Activated B cell treated with CpG ODN at 0.5 μM for 24 hours (primary cell): ENCODE measurements at regions of chr4 and their contacts with region 1.

Region 1: GRCh38 chr4:81471588-81472288 is at the start of gene RASGEF1B:
- DNase-seq: peak; percentile 97
- ATAC-seq: peak; percentile 82
- H3K4me3 Mint-ChIP-seq: peak within 1 kb of the TSS; percentile 92
- H3K27ac Mint-ChIP-seq: peak within 1 kb of the TSS; percentile 97
- H3K4me1 Mint-ChIP-seq: peaks cover 53% of the 10 kb centered on the region
- H3K27me3 Mint-ChIP-seq: no peaks in the 10 kb centered on the region
- CTCF ChIP-seq: no peak
- total RNA-seq, gene RASGEF1B: 40.2 and 43.7 TPM in 2 replicates

Region 2: GRCh38 chr4:81207828-81208227 is 263.9 kb before region 1 on chr4:
- CTCF ChIA-PET with region 1: no interaction called
- POLR2A ChIA-PET with region 1: no interaction called
- intact Hi-C with region 1: no loop called
- DNase-seq: no peak
- ATAC-seq: no peak
- H3K4me3 Mint-ChIP-seq: no peak overlapping the region
- H3K27ac Mint-ChIP-seq: no peak overlapping the region
- H3K4me1 Mint-ChIP-seq: no peaks in the 10 kb centered on the region
- H3K27me3 Mint-ChIP-seq: peaks cover 20% of the 10 kb centered on the region
- CTCF ChIP-seq: no peak

Region 3: GRCh38 chr4:81482326-81482725 is 10.6 kb after region 1 on chr4:
- CTCF ChIA-PET with region 1: interaction called, 12 read pairs
- POLR2A ChIA-PET with region 1: interaction called, 7 read pairs
- intact Hi-C with region 1: loop called (anchors 1 kb)
- DNase-seq: no peak
- ATAC-seq: no peak
- H3K4me3 Mint-ChIP-seq: no peak overlapping the region
- H3K27ac Mint-ChIP-seq: peak overlapping the region; percentile 43
- H3K4me1 Mint-ChIP-seq: peaks cover 8% of the 10 kb centered on the region
- H3K27me3 Mint-ChIP-seq: no peaks in the 10 kb centered on the region
- CTCF ChIP-seq: no peak

Region 4: GRCh38 chr4:81557306-81557705 is 85.6 kb after region 1 on chr4:
- CTCF ChIA-PET with region 1: interaction called, 20 read pairs
- POLR2A ChIA-PET with region 1: interaction called, 76 read pairs
- intact Hi-C with region 1: loop called (anchors 1 kb)
- DNase-seq: no peak
- ATAC-seq: no peak
- H3K4me3 Mint-ChIP-seq: no peak overlapping the region
- H3K27ac Mint-ChIP-seq: no peak overlapping the region
- H3K4me1 Mint-ChIP-seq: peaks cover 58% of the 10 kb centered on the region
- H3K27me3 Mint-ChIP-seq: no peaks in the 10 kb centered on the region
- CTCF ChIP-seq: no peak

Region 5: DNA sequence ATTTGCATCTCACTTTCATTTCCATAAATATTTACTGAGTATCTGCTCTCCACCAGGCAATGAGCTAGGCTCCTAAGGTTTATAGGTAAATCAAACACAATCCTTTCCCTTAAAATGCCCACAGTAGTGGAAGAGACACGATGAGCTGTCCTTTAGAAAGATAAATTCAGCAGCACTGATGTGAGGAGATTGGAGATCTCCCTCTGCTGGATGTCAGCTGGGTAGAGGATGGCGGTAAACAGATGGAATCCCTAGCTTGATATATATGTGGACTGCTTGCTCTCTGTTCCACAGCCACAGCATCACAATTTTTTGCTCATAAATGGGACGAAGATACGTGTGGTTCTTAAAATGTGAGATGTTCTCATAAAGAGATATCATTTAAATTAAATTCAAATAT is 216.3 kb after region 1 on chr4:
- CTCF ChIA-PET with region 1: interaction called, 42 read pairs
- POLR2A ChIA-PET with region 1: interaction called, 20 read pairs
- intact Hi-C with region 1: loop called (anchors 1 kb)
- DNase-seq: no peak
- ATAC-seq: no peak
- H3K4me3 Mint-ChIP-seq: no peak overlapping the region
- H3K27ac Mint-ChIP-seq: no peak overlapping the region
- H3K4me1 Mint-ChIP-seq: peaks cover 13% of the 10 kb centered on the region
- H3K27me3 Mint-ChIP-seq: no peaks in the 10 kb centered on the region
- CTCF ChIP-seq: no peak

Region 6: DNA sequence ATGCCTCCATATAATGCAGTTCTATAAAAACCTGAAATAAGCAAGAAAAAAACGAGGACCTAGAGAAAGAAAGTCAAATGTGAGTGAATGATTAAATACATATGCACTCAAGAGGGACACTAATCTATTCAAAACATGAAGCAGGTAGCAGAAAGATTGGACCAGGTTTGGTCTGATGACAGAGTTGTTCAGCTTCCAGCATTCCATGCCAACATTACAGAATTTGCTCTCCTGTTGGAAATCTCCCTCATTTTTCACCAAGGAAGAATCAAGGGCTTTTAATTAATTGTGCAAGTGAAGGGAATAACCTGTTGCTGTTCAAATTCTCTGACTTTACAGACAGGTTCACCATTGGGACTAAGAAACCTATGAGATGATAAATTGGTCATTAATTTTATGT is 379.0 kb after region 1 on chr4:
- CTCF ChIA-PET with region 1: interaction called, 239 read pairs
- POLR2A ChIA-PET with region 1: no interaction called
- intact Hi-C with region 1: no loop called
- DNase-seq: no peak
- ATAC-seq: no peak
- H3K4me3 Mint-ChIP-seq: no peak overlapping the region
- H3K27ac Mint-ChIP-seq: no peak overlapping the region
- H3K4me1 Mint-ChIP-seq: no peaks in the 10 kb centered on the region
- H3K27me3 Mint-ChIP-seq: peaks cover 2% of the 10 kb centered on the region
- CTCF ChIP-seq: no peak

Region 7: DNA sequence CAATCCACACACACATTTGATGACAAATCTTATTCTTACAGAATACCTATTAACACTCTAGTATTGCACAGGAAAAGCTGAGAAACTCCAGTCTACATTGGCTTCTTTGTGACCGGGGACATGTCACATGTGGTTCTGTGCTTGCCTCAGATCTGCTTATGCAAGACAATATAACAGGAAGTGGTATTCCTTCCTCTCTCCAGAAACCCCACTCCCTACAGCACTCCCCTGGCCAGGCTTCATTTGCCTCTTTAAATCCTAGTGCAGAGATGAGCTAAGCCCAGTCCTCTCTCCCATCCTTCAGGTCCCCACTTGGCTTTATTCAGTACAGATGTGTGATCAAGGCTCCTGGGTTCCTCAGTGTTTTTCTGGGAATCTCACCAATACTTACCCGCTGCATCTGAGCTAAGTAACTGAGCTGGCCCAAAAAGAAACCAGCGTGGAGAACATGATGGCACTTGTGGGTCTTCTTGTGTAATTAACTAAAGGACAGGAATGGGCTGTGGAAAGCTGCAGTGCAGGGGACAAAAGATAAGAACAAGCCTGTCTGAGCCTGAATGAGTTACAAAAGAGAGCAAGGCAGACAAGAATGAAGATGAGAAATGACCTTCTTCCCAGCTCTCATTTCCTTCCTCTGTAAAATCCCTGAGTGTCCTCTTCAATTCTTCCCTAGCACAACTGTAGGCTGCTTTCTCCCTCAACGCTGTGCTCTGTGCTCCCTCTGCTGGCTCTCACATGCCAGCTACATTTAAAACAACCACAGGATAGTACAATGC is 796.5 kb after region 1 on chr4:
- CTCF ChIA-PET with region 1: interaction called, 13 read pairs
- POLR2A ChIA-PET with region 1: interaction called, 4 read pairs
- intact Hi-C with region 1: loop called (anchors 1 kb)
- DNase-seq: no peak
- ATAC-seq: peak; percentile 89
- H3K4me3 Mint-ChIP-seq: no peak overlapping the region
- H3K27ac Mint-ChIP-seq: no peak overlapping the region
- H3K4me1 Mint-ChIP-seq: peaks cover 32% of the 10 kb centered on the region
- H3K27me3 Mint-ChIP-seq: peaks cover 3% of the 10 kb centered on the region
- CTCF ChIP-seq: peak; percentile 62

Region 8: DNA sequence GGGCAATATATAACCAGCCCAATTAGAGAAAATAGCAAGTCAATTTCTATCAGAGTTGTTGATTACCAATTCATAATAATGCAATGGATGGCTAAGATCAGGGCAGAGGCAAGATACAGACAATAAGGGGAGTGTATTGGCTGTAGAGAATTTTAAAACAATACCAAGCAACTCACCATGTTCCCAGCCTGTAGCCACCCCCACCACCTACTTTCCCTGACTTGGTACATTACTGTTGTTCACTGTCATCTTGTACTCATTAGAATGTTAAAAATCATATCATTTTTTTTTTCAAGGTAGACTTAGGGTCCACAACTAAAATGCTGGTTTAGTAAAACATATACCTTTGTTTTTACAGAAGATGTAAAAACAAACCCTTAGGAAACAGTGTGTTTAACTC is 874.4 kb after region 1 on chr4:
- CTCF ChIA-PET with region 1: no interaction called
- POLR2A ChIA-PET with region 1: no interaction called
- intact Hi-C with region 1: no loop called
- DNase-seq: no peak
- ATAC-seq: no peak
- H3K4me3 Mint-ChIP-seq: no peak overlapping the region
- H3K27ac Mint-ChIP-seq: no peak overlapping the region
- H3K4me1 Mint-ChIP-seq: peaks cover 4% of the 10 kb centered on the region
- H3K27me3 Mint-ChIP-seq: no peaks in the 10 kb centered on the region
- CTCF ChIP-seq: no peak

Region 9: GRCh38 chr4:82428969-82429727 is 957.4 kb after region 1 on chr4:
- CTCF ChIA-PET with region 1: no interaction called
- POLR2A ChIA-PET with region 1: no interaction called
- intact Hi-C with region 1: loop called (anchors 1 kb)
- DNase-seq: peak; percentile 97
- ATAC-seq: peak; percentile 59
- H3K4me3 Mint-ChIP-seq: peak overlapping the region; percentile 100
- H3K27ac Mint-ChIP-seq: peak overlapping the region; percentile 99
- H3K4me1 Mint-ChIP-seq: peaks cover 58% of the 10 kb centered on the region
- H3K27me3 Mint-ChIP-seq: no peaks in the 10 kb centered on the region
- CTCF ChIP-seq: peak; percentile 68